Panc1 (cell line): ENCODE measurements at regions of chr6 and their contacts with region 1.

Region 1: GRCh38 chr6:168167431-168168315 is 88.7 kb upstream of the FRMD1 start:
- DNase-seq: no peak
- ATAC-seq: no peak
- H3K4me3 ChIP-seq: no peak overlapping the region
- H3K27ac ChIP-seq: no peak overlapping the region
- H3K4me1 ChIP-seq: no peaks in the 10 kb centered on the region
- H3K27me3 ChIP-seq: no peaks in the 10 kb centered on the region
- CTCF ChIP-seq: no peak

Region 2: GRCh38 chr6:167699141-167699931 is 468.3 kb before region 1 on chr6:
- CTCF ChIA-PET with region 1: no interaction called
- POLR2A ChIA-PET with region 1: no interaction called
- in situ Hi-C with region 1: no loop called
- intact Hi-C with region 1: no loop called
- DNase-seq: no peak
- ATAC-seq: peak; percentile 24; the same call in 1 of the 2 replicates
- H3K4me3 ChIP-seq: no peak overlapping the region
- H3K27ac ChIP-seq: no peak overlapping the region
- H3K4me1 ChIP-seq: no peaks in the 10 kb centered on the region
- H3K27me3 ChIP-seq: no peaks in the 10 kb centered on the region
- CTCF ChIP-seq: no peak

Region 3: GRCh38 chr6:168232970-168233874 is 65.5 kb after region 1 on chr6:
- CTCF ChIA-PET with region 1: no interaction called
- POLR2A ChIA-PET with region 1: interaction called, 12 read pairs
- in situ Hi-C with region 1: no loop called
- intact Hi-C with region 1: no loop called
- DNase-seq: no peak
- ATAC-seq: peak; percentile 76; the same call in 1 of the 2 replicates
- H3K4me3 ChIP-seq: no peak overlapping the region
- H3K27ac ChIP-seq: no peak overlapping the region
- H3K4me1 ChIP-seq: no peaks in the 10 kb centered on the region
- H3K27me3 ChIP-seq: 0 out of 2 replicates have a peak, but pooled peaks cover 2% of the 10 kb centered on the region
- CTCF ChIP-seq: no peak